Right cardiac atrium (tissue), 5 donors: ENCODE measurements at regions of chr19 and their contacts with region 1.

Region 1: GRCh38 chr19:771332-771785 is 20.4 kb downstream of the MISP start:
- DNase-seq: peak; percentile 62 to 73 (median 67)
- ATAC-seq: peak; percentile 50 to 61
- H3K4me3 ChIP-seq: no peak overlapping the region
- H3K27ac ChIP-seq: no peak overlapping the region
- H3K4me1 ChIP-seq: no peaks in the 10 kb centered on the region
- H3K27me3 ChIP-seq: no peaks in the 10 kb centered on the region

Region 2: GRCh38 chr19:718991-719512 is 52.3 kb before region 1 on chr19:
- intact Hi-C with region 1: no loop called
- DNase-seq: peak; percentile 91 to 95 (median 94)
- ATAC-seq: peak; percentile 74 to 81
- H3K4me3 ChIP-seq: no peak overlapping the region
- H3K27ac ChIP-seq: peak overlapping the region; percentile 38
- H3K4me1 ChIP-seq: no peaks in the 10 kb centered on the region
- H3K27me3 ChIP-seq: no peaks in the 10 kb centered on the region

Region 3: GRCh38 chr19:850221-850978 is 79.0 kb after region 1 on chr19:
- intact Hi-C with region 1: loop called in 2 of 4 experiments (anchors 5 to 10 kb)
- DNase-seq: peak; percentile 96 to 98 (median 97)
- ATAC-seq: peak; percentile 90 to 91
- H3K4me3 ChIP-seq: no peak overlapping the region
- H3K27ac ChIP-seq: peak overlapping the region; percentile 34
- H3K4me1 ChIP-seq: no peaks in the 10 kb centered on the region
- H3K27me3 ChIP-seq: no peaks in the 10 kb centered on the region

Region 4: DNA sequence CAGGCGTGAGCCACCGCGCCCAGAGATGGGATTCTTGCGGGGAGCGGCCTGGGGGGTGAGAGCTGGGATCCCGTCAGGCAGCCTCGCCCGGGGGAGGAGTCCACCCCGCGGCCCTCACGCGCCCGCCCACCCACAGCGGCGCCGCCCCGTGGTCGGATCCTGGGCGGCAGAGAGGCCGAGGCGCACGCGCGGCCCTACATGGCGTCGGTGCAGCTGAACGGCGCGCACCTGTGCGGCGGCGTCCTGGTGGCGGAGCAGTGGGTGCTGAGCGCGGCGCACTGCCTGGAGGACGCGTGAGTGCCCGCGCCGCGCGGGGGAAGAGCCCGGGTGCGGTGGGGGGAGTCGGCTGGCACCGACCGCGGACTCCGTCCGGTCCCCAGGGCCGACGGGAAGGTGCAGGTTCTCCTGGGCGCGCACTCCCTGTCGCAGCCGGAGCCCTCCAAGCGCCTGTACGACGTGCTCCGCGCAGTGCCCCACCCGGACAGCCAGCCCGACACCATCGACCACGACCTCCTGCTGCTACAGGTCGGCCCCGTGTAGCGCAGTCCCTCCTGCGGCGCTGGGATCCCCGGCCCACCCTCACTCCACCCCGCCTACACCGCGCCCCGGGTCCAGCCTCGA is 89.2 kb after region 1 on chr19:
- intact Hi-C with region 1: loop called in 2 of 4 experiments (anchors 5 to 10 kb)
- DNase-seq: peak; percentile 84 to 93 (median 91)
- ATAC-seq: peak; percentile 63 to 64
- H3K4me3 ChIP-seq: peak overlapping the region; percentile 54
- H3K27ac ChIP-seq: no peak overlapping the region
- H3K4me1 ChIP-seq: no peaks in the 10 kb centered on the region
- H3K27me3 ChIP-seq: no peaks in the 10 kb centered on the region

Region 5: DNA sequence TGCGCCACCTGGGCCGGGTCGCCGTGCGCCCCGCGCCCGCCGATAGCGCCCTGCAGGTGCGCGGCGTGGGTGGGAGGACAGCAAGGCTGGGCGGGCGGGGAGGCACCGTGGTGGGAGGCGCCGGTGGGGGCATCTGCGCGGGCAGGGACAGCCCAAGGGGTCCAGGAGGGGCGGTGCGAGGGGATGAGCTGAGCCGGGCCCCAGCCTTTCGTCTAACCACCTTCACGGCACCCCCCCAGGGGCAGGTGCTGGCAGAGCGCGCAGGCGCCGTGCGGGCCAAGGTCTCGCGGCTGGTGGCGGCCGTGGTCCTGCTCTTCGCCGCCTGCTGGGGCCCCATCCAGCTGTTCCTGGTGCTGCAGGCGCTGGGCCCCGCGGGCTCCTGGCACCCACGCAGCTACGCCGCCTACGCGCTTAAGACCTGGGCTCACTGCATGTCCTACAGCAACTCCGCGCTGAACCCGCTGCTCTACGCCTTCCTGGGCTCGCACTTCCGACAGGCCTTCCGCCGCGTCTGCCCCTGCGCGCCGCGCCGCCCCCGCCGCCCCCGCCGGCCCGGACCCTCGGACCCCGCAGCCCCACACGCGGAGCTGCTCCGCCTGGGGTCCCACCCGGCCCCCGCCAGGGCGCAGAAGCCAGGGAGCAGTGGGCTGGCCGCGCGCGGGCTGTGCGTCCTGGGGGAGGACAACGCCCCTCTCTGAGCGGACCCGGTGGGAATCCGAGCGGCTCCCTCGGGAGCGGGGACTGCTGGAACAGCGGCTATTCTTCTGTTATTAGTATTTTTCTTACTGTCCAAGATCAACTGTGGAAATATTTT is 148.9 kb after region 1 on chr19:
- intact Hi-C with region 1: loop called (anchors 1 to 10 kb)
- DNase-seq: peak in 1 of 3 donors; percentile 70
- ATAC-seq: no peak
- H3K4me3 ChIP-seq: peak overlapping the region; percentile 22
- H3K27ac ChIP-seq: no peak overlapping the region
- H3K4me1 ChIP-seq: no peaks in the 10 kb centered on the region
- H3K27me3 ChIP-seq: no peaks in the 10 kb centered on the region

Region 6: GRCh38 chr19:925526-926322 is 154.4 kb after region 1 on chr19 and contains the start of gene ARID3A:
- intact Hi-C with region 1: loop called (anchors 1 to 10 kb)
- DNase-seq: peak; percentile 77 to 92 (median 92)
- ATAC-seq: peak; percentile 79 to 85
- H3K4me3 ChIP-seq: peak within 1 kb of the TSS; percentile 97
- H3K27ac ChIP-seq: peak within 1 kb of the TSS; percentile 26
- H3K4me1 ChIP-seq: no peaks in the 10 kb centered on the region
- H3K27me3 ChIP-seq: no peaks in the 10 kb centered on the region
- total RNA-seq, gene ARID3A: 4.2 to 6.2 (median 5.6) TPM

Region 7: DNA sequence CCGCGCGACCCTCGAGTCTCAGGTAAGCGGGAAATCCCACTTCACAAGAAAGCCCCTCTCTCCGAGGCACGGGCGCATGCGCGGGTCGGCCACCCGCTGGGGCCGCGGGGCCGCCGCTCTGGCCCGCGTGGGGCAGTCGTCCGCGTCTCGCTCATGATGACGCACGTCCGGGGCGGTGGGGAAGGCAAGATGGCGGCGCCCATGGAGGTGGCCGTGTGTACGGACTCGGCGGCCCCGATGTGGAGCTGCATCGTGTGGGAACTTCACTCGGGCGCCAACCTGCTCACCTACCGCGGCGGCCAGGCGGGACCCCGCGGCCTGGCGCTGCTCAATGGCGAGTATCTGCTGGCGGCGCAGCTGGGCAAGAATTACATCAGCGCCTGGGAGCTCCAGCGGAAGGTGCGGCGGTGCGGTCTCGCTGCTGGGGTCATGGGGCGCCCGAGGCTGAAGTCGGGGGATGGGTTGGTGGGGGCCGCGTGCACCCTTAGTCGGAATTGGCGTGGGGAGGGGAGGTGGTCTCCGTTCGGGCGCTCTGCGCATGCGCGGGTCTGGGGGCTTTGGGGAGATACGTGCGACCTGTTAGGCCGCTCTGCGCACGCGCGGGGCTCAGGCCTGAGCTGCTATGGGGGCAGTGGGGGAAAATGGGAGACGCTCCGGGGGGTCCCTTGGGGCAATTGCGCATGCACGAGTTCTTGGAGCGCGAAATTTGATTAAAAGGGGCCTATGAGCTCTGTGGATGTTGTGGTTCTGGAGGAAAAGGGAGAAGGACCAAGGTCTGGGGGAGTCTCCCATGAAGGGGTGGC is 213.0 kb after region 1 on chr19 and contains the start of gene WDR18:
- intact Hi-C with region 1: loop called in 3 of 4 experiments (anchors 2 to 10 kb)
- DNase-seq: peak; percentile 95 to 98 (median 98)
- ATAC-seq: peak; percentile 95 to 96
- H3K4me3 ChIP-seq: peak within 1 kb of the TSS; percentile 92
- H3K27ac ChIP-seq: peak within 1 kb of the TSS; percentile 84
- H3K4me1 ChIP-seq: no peaks in the 10 kb centered on the region
- H3K27me3 ChIP-seq: no peaks in the 10 kb centered on the region
- total RNA-seq, gene WDR18: 12.2 to 24.0 (median 15.8) TPM